ENCODE measurements at regions of chr3 and their contacts with region 1.

Region 1: DNA sequence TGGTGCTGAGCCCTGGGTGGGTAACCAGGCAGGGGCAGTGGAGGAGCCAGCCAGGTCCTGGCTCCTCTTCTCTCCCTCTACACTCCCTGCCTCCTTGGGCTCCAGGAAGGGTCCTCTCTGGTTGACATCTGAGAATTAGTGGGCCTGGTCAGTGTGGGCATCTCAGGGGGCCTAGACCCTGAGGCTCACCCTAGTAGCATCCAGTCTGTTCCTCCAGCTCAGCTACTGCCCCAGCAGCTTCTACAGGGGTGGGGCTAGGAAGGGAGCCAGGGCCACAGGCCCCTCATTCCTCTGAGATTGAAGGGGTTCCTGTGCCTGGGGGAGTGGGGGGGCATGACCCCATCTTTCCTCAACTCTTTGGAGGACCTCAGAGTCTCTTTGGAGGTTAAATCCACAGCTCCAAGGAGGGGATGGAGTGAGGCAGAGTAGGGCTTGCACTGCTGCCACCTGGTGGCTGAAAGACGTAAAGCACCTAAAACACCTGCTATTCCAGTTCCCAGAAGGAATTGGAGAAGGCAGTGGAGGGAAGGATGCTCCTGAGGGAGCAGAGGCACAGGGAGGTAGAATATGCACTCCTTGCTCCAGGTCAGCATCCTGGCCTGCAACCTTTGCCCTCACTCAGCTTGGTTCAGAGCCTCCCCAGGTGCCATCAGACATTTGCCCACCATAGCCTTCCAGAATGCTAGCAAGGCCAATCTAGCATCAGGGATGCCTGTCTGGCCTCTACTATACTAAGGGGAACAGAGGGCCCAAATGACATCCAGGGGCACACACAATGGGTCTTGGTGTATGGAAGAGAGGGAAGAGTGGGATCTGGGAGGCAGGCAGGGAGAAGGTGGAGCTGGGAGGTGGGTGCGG is 25.1 kb downstream of the C3orf18 start:
- DNase-seq: peak; percentile 75
- ATAC-seq: peak; percentile 93
- H3K4me3 Mint-ChIP-seq: no peak overlapping the region
- H3K27ac Mint-ChIP-seq: no peak overlapping the region
- H3K4me1 Mint-ChIP-seq: no peaks in the 10 kb centered on the region
- H3K27me3 Mint-ChIP-seq: no peaks in the 10 kb centered on the region
- CTCF ChIP-seq: peak; percentile 90

Region 2: DNA sequence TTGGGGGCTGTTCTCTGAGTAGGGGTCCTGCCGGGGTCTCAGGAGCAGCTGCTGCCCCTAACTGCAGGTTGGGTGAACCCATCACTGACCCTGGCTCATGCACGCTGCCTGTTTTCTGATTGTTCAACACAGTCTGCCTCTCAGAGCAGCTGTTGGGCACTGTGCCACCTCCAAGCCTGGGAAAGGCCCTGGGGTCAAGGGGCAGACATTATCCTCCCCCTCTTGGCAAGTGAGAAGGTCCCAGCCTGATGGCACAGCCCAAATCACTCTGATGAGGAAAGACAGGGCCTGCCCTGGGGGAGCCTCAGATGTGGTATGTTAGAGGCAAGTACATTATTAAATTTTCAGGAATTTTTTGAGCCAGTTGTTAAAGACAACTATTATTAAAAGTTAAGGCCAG is 365.1 kb before region 1 on chr3:
- CTCF ChIA-PET with region 1: no interaction called
- POLR2A ChIA-PET with region 1: no interaction called
- intact Hi-C with region 1: no loop called
- DNase-seq: no peak
- ATAC-seq: no peak
- H3K4me3 Mint-ChIP-seq: no peak overlapping the region
- H3K27ac Mint-ChIP-seq: no peak overlapping the region
- H3K4me1 Mint-ChIP-seq: peaks cover 1% of the 10 kb centered on the region
- H3K27me3 Mint-ChIP-seq: no peaks in the 10 kb centered on the region
- CTCF ChIP-seq: no peak

Region 3: GRCh38 chr3:50390508-50391224 is 151.7 kb before region 1 on chr3:
- CTCF ChIA-PET with region 1: interaction called, 11 read pairs
- POLR2A ChIA-PET with region 1: no interaction called
- intact Hi-C with region 1: no loop called
- DNase-seq: no peak
- ATAC-seq: no peak
- H3K4me3 Mint-ChIP-seq: no peak overlapping the region
- H3K27ac Mint-ChIP-seq: no peak overlapping the region
- H3K4me1 Mint-ChIP-seq: peaks cover 6% of the 10 kb centered on the region
- H3K27me3 Mint-ChIP-seq: no peaks in the 10 kb centered on the region
- CTCF ChIP-seq: no peak

Region 4: GRCh38 chr3:50436114-50436674 is 106.2 kb before region 1 on chr3:
- CTCF ChIA-PET with region 1: interaction called, 63 read pairs
- POLR2A ChIA-PET with region 1: no interaction called
- intact Hi-C with region 1: loop called (anchors 2 kb)
- DNase-seq: peak; percentile 89
- ATAC-seq: peak; percentile 99
- H3K4me3 Mint-ChIP-seq: no peak overlapping the region
- H3K27ac Mint-ChIP-seq: no peak overlapping the region
- H3K4me1 Mint-ChIP-seq: peaks cover 2% of the 10 kb centered on the region
- H3K27me3 Mint-ChIP-seq: no peaks in the 10 kb centered on the region
- CTCF ChIP-seq: peak; percentile 88

Region 5: GRCh38 chr3:50503504-50504342 is 38.7 kb before region 1 on chr3 and contains the start of gene CACNA2D2:
- CTCF ChIA-PET with region 1: interaction called, 23 read pairs
- POLR2A ChIA-PET with region 1: no interaction called
- intact Hi-C with region 1: no loop called
- DNase-seq: peak; percentile 60
- ATAC-seq: peak; percentile 91
- H3K4me3 Mint-ChIP-seq: peak within 1 kb of the TSS; percentile 63
- H3K27ac Mint-ChIP-seq: no peak within 1 kb of the TSS
- H3K4me1 Mint-ChIP-seq: peaks cover 4% of the 10 kb centered on the region
- H3K27me3 Mint-ChIP-seq: peaks cover 12% of the 10 kb centered on the region
- CTCF ChIP-seq: no peak
- total RNA-seq, gene CACNA2D2: 1.6 to 2.1 TPM

Region 6: GRCh38 chr3:50519471-50520089 is 22.8 kb before region 1 on chr3:
- CTCF ChIA-PET with region 1: interaction called, 38 read pairs
- POLR2A ChIA-PET with region 1: interaction called, 4 read pairs
- intact Hi-C with region 1: no loop called
- DNase-seq: peak; percentile 85
- ATAC-seq: peak; percentile 94
- H3K4me3 Mint-ChIP-seq: no peak overlapping the region
- H3K27ac Mint-ChIP-seq: no peak overlapping the region
- H3K4me1 Mint-ChIP-seq: peaks cover 3% of the 10 kb centered on the region
- H3K27me3 Mint-ChIP-seq: no peaks in the 10 kb centered on the region
- CTCF ChIP-seq: peak; percentile 91